ENCODE measurements at regions of chr1 and their contacts with region 1.

Region 1: DNA sequence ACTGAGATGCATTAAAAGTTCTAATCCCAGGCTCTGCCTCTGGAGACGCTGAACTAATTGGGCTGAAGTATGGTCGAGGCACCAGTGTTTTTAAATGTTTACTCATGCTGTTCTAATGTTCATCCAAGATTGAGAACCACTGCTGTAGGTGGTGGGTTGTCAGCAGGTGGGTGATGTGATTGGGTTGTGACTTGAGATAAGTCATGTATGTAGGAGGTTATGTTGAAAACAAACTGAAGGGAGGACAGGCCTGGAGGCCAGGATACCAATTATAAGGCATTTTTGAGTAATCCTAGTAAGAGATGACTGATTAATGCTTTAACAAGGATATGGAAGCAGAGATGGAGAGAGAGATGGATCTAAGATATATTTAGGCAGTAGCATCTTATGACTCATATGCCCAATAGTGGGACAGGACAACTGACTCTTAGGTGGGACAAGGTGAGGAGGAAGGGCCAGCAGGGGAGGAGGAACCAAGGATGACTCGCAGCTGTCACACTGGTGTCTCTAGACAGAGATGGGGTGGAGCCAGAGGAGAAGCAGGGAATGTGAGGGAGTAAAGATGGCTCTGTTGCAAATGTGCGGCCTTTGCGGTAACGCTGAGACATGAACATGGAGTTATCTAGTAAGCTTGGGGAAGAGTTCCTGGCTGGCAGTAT is 29.3 kb downstream of the RAB4A start:
- DNase-seq: peak; percentile 23
- H3K4me3 Mint-ChIP-seq: no peak overlapping the region
- H3K27ac Mint-ChIP-seq: peak overlapping the region; percentile 0
- H3K4me1 Mint-ChIP-seq: peaks cover 6% of the 10 kb centered on the region
- H3K27me3 Mint-ChIP-seq: no peaks in the 10 kb centered on the region
- CTCF ChIP-seq: no peak

Region 2: GRCh38 chr1:228721402-228721801 is 578.8 kb before region 1 on chr1:
- CTCF ChIA-PET with region 1: no interaction called
- POLR2A ChIA-PET with region 1: no interaction called
- intact Hi-C with region 1: no loop called
- DNase-seq: no peak
- H3K4me3 Mint-ChIP-seq: no peak overlapping the region
- H3K27ac Mint-ChIP-seq: no peak overlapping the region
- H3K4me1 Mint-ChIP-seq: no peaks in the 10 kb centered on the region
- H3K27me3 Mint-ChIP-seq: no peaks in the 10 kb centered on the region
- CTCF ChIP-seq: no peak

Region 3: GRCh38 chr1:228989992-228990827 is 310.0 kb before region 1 on chr1:
- CTCF ChIA-PET with region 1: no interaction called
- POLR2A ChIA-PET with region 1: no interaction called
- intact Hi-C with region 1: no loop called
- DNase-seq: no peak
- H3K4me3 Mint-ChIP-seq: no peak overlapping the region
- H3K27ac Mint-ChIP-seq: no peak overlapping the region
- H3K4me1 Mint-ChIP-seq: peaks cover 9% of the 10 kb centered on the region
- H3K27me3 Mint-ChIP-seq: no peaks in the 10 kb centered on the region
- CTCF ChIP-seq: no peak

Region 4: DNA sequence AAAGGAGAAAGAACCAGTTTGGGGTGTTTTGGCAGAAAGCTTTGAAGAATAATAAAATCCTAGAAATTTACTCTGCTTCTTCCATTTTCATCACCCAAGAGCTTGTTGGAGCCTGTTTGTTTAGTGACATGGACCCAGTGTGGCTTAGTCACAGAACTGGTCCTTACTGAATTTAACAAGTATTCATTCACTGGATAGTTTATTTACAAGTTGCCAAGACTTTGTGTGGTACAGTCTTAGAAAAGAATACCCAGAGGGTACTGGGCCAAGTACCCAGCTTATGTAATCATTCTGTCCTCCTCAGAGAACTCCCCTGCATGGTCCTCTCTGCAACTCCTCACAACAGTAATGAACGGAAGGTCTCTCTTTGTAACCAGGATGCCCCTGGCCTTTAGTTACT is 13.0 kb before region 1 on chr1:
- CTCF ChIA-PET with region 1: no interaction called
- POLR2A ChIA-PET with region 1: interaction called, 14 read pairs
- intact Hi-C with region 1: no loop called
- DNase-seq: peak; percentile 58
- H3K4me3 Mint-ChIP-seq: no peak overlapping the region
- H3K27ac Mint-ChIP-seq: no peak overlapping the region
- H3K4me1 Mint-ChIP-seq: peaks cover 32% of the 10 kb centered on the region
- H3K27me3 Mint-ChIP-seq: no peaks in the 10 kb centered on the region
- CTCF ChIP-seq: no peak

Measured in MCF 10A (cell line).